MCF 10A (cell line): ENCODE measurements at regions of chr7 and their contacts with region 1.

Region 1: GRCh38 chr7:112414855-112415490 is 35.3 kb upstream of the IFRD1 start:
- DNase-seq: peak; percentile 64
- H3K4me3 Mint-ChIP-seq: no peak overlapping the region
- H3K27ac Mint-ChIP-seq: no peak overlapping the region
- H3K4me1 Mint-ChIP-seq: peaks cover 9% of the 10 kb centered on the region
- H3K27me3 Mint-ChIP-seq: no peaks in the 10 kb centered on the region
- CTCF ChIP-seq: peak; percentile 54

Region 2: DNA sequence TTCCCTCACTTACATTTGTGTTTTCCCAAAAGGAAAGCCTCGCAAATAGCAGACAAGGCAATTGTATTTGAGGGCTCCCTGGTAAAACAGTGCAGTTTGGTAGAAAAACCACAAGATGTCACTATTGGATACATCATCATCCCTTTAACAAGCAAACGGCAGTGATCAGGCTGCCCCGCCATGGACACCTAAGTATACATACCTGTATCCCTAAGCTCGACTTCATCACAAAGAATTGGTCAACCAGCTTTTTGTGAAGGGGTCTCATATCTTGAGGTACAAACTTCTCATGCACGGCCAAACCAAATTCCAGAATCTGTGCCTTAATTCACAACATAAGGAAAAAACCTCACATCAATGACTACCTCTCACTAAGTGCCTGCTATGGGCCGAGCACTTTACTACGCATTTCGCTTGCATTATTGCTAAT is 673.1 kb before region 1 on chr7:
- CTCF ChIA-PET with region 1: interaction called, 21 read pairs
- POLR2A ChIA-PET with region 1: no interaction called
- intact Hi-C with region 1: loop called (anchors 5 kb)
- DNase-seq: peak; percentile 78
- H3K4me3 Mint-ChIP-seq: no peak overlapping the region
- H3K27ac Mint-ChIP-seq: no peak overlapping the region
- H3K4me1 Mint-ChIP-seq: no peaks in the 10 kb centered on the region
- H3K27me3 Mint-ChIP-seq: no peaks in the 10 kb centered on the region
- CTCF ChIP-seq: peak; percentile 64

Region 3: DNA sequence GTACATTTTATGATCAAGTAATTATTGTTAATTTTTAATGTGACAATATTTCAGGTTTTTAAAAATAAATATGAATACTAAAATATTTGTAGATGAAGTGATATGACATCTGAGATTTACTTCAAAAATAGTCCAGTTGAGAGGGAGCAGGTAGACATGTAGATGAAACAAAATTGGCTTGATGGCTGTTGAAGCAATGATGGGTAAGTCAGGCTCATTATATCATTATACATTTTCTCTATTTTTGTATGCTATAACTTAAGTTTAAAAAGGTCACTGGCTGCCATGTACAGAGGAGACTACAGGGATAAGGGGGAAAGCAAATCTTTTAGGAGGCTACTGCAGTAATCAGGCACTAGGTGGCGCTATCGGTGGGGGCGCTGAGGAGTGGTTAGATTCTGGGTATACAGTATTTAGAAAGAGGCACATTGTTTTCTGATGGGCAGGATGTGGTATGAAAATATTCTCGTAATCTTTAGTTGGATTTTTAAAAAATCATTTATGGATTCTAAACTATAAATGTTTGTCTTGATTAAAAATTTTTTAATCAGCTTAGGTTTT is 662.9 kb before region 1 on chr7:
- CTCF ChIA-PET with region 1: interaction called, 9 read pairs
- POLR2A ChIA-PET with region 1: interaction called, 3 read pairs
- intact Hi-C with region 1: loop called (anchors 1 kb)
- DNase-seq: peak; percentile 75
- H3K4me3 Mint-ChIP-seq: no peak overlapping the region
- H3K27ac Mint-ChIP-seq: no peak overlapping the region
- H3K4me1 Mint-ChIP-seq: peaks cover 6% of the 10 kb centered on the region
- H3K27me3 Mint-ChIP-seq: no peaks in the 10 kb centered on the region
- CTCF ChIP-seq: peak; percentile 81

Region 4: DNA sequence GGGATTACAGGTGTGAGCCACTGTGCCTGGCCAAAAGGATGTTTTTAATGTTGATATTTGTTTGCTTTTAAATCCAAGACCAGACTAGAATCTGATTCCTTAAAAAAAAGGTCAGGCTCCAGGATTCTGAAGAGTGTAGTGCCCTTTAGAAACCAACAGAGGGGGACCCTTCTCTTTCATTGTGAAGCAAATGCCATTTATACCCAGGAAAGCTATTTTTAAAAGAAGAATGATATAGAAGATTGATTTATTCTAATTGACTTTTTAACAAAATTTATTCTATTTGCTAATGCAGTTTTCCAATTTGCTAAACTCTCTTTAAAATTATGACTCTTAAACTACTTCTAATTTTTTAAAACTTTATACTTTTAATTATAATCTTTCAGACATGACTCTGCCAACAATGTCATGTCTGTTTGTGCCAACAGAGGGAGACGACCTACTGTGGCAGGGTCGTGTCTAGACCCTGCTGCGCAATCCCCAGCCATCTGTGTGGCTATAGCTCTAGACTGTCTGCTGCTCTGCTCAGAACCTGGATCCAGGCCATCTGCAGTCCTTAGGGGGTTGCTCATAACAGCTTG is 651.7 kb before region 1 on chr7:
- CTCF ChIA-PET with region 1: interaction called, 10 read pairs
- POLR2A ChIA-PET with region 1: interaction called, 3 read pairs
- intact Hi-C with region 1: no loop called
- DNase-seq: peak; percentile 63
- H3K4me3 Mint-ChIP-seq: no peak overlapping the region
- H3K27ac Mint-ChIP-seq: no peak overlapping the region
- H3K4me1 Mint-ChIP-seq: no peaks in the 10 kb centered on the region
- H3K27me3 Mint-ChIP-seq: no peaks in the 10 kb centered on the region
- CTCF ChIP-seq: peak; percentile 50

Region 5: GRCh38 chr7:111919631-111920179 is 495.3 kb before region 1 on chr7:
- CTCF ChIA-PET with region 1: no interaction called
- POLR2A ChIA-PET with region 1: no interaction called
- intact Hi-C with region 1: loop called (anchors 10 kb)
- DNase-seq: peak; percentile 23
- H3K4me3 Mint-ChIP-seq: no peak overlapping the region
- H3K27ac Mint-ChIP-seq: no peak overlapping the region
- H3K4me1 Mint-ChIP-seq: peaks cover 11% of the 10 kb centered on the region
- H3K27me3 Mint-ChIP-seq: no peaks in the 10 kb centered on the region
- CTCF ChIP-seq: no peak

Region 6: DNA sequence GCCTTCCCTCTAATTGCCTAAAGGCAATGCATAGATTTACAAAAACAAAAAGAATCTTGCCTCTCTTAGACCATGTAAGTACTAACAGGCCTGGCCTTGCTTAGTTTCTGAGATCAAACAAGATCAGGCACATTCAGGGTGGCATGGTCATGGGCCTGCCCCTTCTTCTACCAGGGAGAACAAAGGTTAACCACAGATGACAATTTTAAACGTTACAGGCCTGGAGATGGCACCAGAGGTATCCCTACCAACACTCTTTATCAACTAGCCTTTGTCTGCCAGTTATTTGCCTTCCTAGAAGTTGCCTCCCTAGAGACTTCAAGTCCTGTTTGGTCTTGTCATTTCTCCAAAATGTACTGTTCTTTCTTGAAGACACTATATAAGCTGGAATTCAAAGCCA is 461.4 kb before region 1 on chr7:
- CTCF ChIA-PET with region 1: interaction called, 14 read pairs
- POLR2A ChIA-PET with region 1: interaction called, 3 read pairs
- intact Hi-C with region 1: loop called (anchors 1 kb)
- DNase-seq: peak; percentile 51
- H3K4me3 Mint-ChIP-seq: no peak overlapping the region
- H3K27ac Mint-ChIP-seq: peak overlapping the region; percentile 67
- H3K4me1 Mint-ChIP-seq: peaks cover 18% of the 10 kb centered on the region
- H3K27me3 Mint-ChIP-seq: no peaks in the 10 kb centered on the region
- CTCF ChIP-seq: peak; percentile 24